ENCODE measurements at regions of chr1 and their contacts with region 1.

Region 1: GRCh38 chr1:109649491-109649914 is 6.4 kb upstream of the GSTM4 start:
- DNase-seq: no peak
- ATAC-seq: no peak
- H3K4me3 Mint-ChIP-seq: no peak overlapping the region
- H3K27ac Mint-ChIP-seq: no peak overlapping the region
- H3K4me1 Mint-ChIP-seq: no peaks in the 10 kb centered on the region
- H3K27me3 Mint-ChIP-seq: peaks cover 3% of the 10 kb centered on the region

Region 2: DNA sequence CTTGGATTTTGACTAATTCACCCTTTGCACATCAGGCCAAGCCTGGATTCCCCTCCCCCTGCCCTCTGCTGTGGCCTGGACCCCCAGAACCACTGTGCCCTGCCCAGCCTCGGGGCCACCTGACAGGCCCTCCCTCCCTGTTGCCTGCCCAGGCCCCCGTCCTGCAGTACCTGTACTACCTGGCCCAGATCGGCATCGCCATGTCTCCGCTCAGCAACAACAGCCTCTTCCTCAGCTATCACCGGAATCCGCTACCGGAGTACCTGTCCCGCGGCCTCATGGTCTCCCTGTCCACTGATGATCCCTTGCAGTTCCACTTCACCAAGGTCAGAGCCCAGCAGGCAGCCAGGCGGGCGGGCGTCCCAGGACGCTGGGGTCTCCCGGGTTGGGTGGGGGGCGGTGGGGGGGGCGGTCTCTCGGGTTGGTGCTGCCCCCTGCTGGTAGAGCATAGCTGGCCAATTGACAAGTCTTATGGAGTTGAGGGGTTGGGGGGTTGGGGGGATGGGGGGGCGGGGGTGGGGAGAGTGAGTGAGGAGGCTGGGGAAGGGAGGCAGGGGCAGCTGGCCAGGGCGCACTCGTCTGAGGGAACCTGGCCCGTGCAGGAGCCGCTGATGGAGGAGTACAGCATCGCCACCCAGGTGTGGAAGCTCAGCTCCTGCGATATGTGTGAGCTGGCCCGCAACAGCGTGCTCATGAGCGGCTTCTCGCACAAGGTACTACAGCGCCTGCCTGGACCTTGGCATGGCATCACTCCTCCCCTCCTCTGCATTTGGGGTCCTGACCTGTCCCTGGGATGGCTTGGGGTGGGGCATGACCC is 19.2 kb before region 1 on chr1:
- CTCF ChIA-PET with region 1: interaction called, 17 read pairs
- POLR2A ChIA-PET with region 1: no interaction called
- intact Hi-C with region 1: no loop called
- DNase-seq: peak; percentile 66
- ATAC-seq: no peak
- H3K4me3 Mint-ChIP-seq: no peak overlapping the region
- H3K27ac Mint-ChIP-seq: no peak overlapping the region
- H3K4me1 Mint-ChIP-seq: peaks cover 14% of the 10 kb centered on the region
- H3K27me3 Mint-ChIP-seq: no peaks in the 10 kb centered on the region

Measured in activated CD4-positive, alpha-beta T cell treated with anti-CD3 and anti-CD28 coated beads for 36 hours (primary cell).